ENCODE measurements at regions of chr10 and their contacts with region 1.

Region 1: DNA sequence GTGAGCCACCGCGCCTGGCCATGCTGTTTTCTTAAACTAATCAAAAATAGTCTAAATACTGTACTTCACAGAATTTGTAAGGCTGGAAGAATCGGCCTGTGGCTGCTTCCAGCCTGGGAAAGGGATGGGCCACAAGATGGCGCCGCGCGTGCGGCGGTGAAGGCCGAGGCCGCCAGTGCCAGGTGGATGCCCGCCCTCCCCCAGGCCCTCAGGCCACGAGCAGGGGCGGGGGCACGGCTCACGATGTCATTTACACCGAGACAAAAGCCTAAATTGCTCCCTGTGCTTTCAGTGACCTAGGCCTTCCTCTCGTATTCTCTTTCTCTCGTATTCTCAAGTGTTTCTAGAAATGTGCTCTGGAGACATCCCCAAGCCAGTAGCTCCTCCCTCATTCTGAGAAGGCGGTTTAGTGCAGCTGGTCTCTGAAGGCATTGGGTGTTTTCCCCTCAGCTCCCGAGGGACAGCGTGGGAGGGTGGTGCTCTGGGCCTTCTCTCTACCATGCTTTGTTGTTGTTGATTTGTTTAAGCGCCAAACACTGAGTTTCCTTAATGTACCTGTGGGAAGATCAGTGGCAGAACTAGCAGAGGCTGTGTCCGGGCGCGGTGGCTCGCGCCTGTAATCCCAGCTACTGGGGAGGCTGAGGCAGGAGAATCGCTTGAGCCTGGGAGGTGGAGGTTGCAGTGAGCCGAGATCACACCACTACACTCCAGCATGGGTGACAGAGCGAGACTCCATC is 68.4 kb downstream of the CDC123 start:
- DNase-seq: peak; percentile 63 to 86 (median 77)
- ATAC-seq: peak; percentile 75 to 91 (median 88)
- H3K4me3 ChIP-seq: peak overlapping the region in 10 of 12 donors; percentile 28 to 55 (median 40)
- H3K27ac ChIP-seq: peak overlapping the region in 5 of 12 donors; percentile 59 to 84 (median 67)
- H3K4me1 ChIP-seq: peaks cover 0 to 35% (median 0%) of the 10 kb centered on the region in 12 donors
- H3K27me3 ChIP-seq: no peaks in the 10 kb centered on the region
- CTCF ChIP-seq: peak; percentile 73 to 95 (median 90)
- POLR2A ChIP-seq: no peak

Region 2: GRCh38 chr10:12235796-12236195 is 28.6 kb before region 1 on chr10:
- intact Hi-C with region 1: loop called in 1 of 10 experiments (anchors 2 kb)
- DNase-seq: no peak
- ATAC-seq: peak in 1 of 4 donors; percentile 26
- H3K4me3 ChIP-seq: no peak overlapping the region
- H3K27ac ChIP-seq: peak overlapping the region; percentile 5 to 72 (median 64)
- H3K4me1 ChIP-seq: peaks cover 0 to 16% (median 7%) of the 10 kb centered on the region in 12 donors
- H3K27me3 ChIP-seq: no peaks in the 10 kb centered on the region
- CTCF ChIP-seq: no peak
- POLR2A ChIP-seq: no peak

Region 3: GRCh38 chr10:12484941-12485805 is 220.8 kb after region 1 on chr10:
- intact Hi-C with region 1: loop called in 1 of 10 experiments (anchors 10 kb)
- DNase-seq: peak in 4 of 5 donors; percentile 33 to 58 (median 52)
- ATAC-seq: peak; percentile 80 to 92 (median 91)
- H3K4me3 ChIP-seq: peak overlapping the region in 8 of 12 donors; percentile 9 to 28 (median 20)
- H3K27ac ChIP-seq: peak overlapping the region in 11 of 12 donors; percentile 17 to 77 (median 53)
- H3K4me1 ChIP-seq: peaks cover 0 to 16% (median 10%) of the 10 kb centered on the region in 12 donors
- H3K27me3 ChIP-seq: no peaks in the 10 kb centered on the region
- CTCF ChIP-seq: peak in 1 of 12 donors; percentile 10
- POLR2A ChIP-seq: no peak

Region 4: DNA sequence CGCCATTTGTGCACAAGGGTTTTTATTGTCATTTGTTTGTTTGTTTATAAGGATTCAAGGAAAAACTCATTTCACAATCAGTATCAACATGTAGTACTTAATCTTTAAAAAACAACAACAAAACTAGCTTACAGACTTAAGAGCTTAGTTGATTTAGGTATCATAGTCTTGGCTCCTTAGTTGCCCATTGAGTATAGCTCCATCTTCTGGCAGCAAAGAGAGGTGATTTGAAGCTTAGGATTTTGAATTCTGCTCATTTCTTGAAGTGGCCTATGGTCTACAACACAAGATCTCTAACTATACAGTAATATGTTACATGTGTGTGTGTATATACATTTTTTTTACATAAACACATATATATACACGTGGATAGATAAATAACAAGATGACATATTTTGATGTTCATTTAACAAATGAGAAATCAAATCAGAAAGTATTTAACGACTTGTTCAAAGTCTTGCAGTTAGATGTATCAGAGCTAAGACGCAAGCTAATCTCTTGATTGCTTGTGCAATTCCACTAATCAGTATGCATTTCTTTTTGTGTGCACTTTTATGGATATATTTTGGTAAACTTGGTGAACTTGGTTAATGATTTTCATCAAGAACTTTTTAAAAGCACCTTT is 392.3 kb after region 1 on chr10:
- intact Hi-C with region 1: loop called in 9 of 10 experiments (anchors 1 to 10 kb)
- DNase-seq: no peak
- ATAC-seq: peak in 1 of 4 donors; percentile 45
- H3K4me3 ChIP-seq: no peak overlapping the region
- H3K27ac ChIP-seq: no peak overlapping the region
- H3K4me1 ChIP-seq: no peaks in the 10 kb centered on the region
- H3K27me3 ChIP-seq: no peaks in the 10 kb centered on the region
- CTCF ChIP-seq: peak; percentile 55 to 70 (median 63)
- POLR2A ChIP-seq: no peak

Region 5: GRCh38 chr10:12782537-12782936 is 518.2 kb after region 1 on chr10:
- intact Hi-C with region 1: no loop called
- DNase-seq: peak in 1 of 5 donors; percentile 37
- ATAC-seq: no peak
- H3K4me3 ChIP-seq: no peak overlapping the region
- H3K27ac ChIP-seq: no peak overlapping the region
- H3K4me1 ChIP-seq: peaks cover 0 to 5% (median 0%) of the 10 kb centered on the region in 12 donors
- H3K27me3 ChIP-seq: peaks cover 0 to 8% (median 0%) of the 10 kb centered on the region in 9 donors
- CTCF ChIP-seq: peak; percentile 49 to 73 (median 67)
- POLR2A ChIP-seq: no peak

Region 6: DNA sequence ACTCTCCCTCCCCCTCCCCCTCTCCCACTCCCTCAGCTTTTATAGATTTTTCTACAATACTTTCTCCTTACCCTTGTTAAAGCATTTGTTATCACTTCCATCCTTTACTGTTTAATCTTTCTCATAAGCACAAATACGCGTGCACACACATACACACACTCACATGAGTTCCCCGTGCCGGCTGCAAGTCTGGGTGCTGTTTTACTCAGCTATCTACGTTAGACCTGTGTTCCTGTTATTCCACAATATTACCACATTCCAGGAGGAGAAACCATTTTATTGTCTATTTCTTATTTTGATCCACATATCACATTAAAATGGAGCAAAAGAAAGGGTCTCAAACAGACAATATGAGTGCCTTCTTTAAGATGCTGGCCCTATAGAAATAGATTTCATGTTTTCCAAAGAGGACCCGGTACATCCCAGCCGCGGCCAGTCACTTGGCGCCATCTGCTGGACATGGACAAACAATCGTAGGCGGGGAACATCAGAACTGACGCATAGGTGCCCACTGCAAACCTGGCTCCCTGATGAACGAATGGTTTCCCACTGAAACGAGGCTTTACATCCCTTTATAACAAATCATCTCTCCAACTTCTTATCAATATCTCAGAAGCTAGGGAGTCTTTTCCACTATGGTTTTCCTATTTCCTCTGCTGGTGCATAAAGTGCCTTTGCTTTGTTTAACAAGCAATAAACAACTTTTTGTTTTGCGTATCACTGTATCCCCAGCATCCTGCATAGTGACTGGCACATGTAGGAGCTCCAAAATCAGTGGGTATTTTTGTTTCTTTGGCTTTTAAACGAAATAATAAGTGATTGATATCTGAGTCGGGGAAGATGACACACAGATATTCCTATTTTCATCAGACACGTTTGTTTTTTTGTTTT is 810.4 kb after region 1 on chr10:
- intact Hi-C with region 1: loop called (anchors 5 to 10 kb)
- DNase-seq: peak; percentile 55 to 72 (median 60)
- ATAC-seq: peak in 3 of 4 donors; percentile 72 to 82 (median 80)
- H3K4me3 ChIP-seq: no peak overlapping the region
- H3K27ac ChIP-seq: no peak overlapping the region
- H3K4me1 ChIP-seq: no peaks in the 10 kb centered on the region
- H3K27me3 ChIP-seq: peaks cover 0 to 15% (median 3%) of the 10 kb centered on the region in 9 donors
- CTCF ChIP-seq: peak; percentile 66 to 90 (median 80)
- POLR2A ChIP-seq: no peak